Esophagus squamous epithelium (tissue), 5 donors: ENCODE measurements at regions of chr19 and their contacts with region 1.

Region 1: DNA sequence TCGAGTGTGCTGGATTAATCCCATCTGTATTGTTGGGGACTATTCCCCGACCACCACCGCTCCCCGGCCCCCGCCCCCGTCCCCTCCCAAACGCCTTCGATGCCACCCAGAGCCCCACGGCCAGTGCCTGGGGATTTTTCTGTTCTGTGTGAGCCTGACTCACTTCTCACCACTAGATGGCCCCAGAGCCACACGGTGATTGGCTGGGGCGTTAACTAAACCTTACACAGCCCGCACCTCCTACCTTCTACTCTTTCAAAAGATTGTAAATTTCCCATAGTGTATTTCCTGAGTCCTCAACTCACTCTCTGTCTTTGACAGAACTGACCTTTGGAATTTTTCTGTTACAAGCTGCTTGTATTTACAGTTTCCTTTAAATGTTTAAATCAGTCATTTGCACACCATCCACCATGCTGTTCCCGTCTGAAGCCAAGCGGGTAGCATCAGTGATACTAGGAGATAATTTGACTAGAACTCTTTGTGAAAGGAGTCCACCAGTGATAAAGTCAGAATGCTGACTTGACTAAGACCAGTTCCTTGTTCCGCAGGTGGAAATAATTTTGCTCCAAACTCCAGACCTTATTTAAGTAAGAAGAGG is 61.4 kb downstream of the RFX2 start:
- DNase-seq: no peak
- H3K4me3 ChIP-seq: peak overlapping the region in 1 of 4 donors; percentile 24
- H3K27ac ChIP-seq: peak overlapping the region in 2 of 4 donors; percentile 29 to 36
- H3K4me1 ChIP-seq: peaks cover 0 to 22% (median 6%) of the 10 kb centered on the region in 3 donors
- H3K27me3 ChIP-seq: no peaks in the 10 kb centered on the region
- CTCF ChIP-seq: peak; percentile 72 to 90 (median 85)
- POLR2A ChIP-seq: no peak

Region 2: GRCh38 chr19:6125571-6125989 is 76.7 kb after region 1 on chr19:
- intact Hi-C with region 1: loop called (anchors 2 kb)
- DNase-seq: no peak
- H3K4me3 ChIP-seq: no peak overlapping the region
- H3K27ac ChIP-seq: no peak overlapping the region
- H3K4me1 ChIP-seq: no peaks in the 10 kb centered on the region
- H3K27me3 ChIP-seq: no peaks in the 10 kb centered on the region
- CTCF ChIP-seq: peak; percentile 86 to 98 (median 94)
- POLR2A ChIP-seq: no peak